Head of caudate nucleus (tissue), 42 donors: ENCODE measurements at regions of chr12 and their contacts with region 1.

Region 1: GRCh38 chr12:22544038-22544979 is at the start of gene C2CD5:
- DNase-seq: peak; percentile 92 to 99 (median 96)

Region 2: DNA sequence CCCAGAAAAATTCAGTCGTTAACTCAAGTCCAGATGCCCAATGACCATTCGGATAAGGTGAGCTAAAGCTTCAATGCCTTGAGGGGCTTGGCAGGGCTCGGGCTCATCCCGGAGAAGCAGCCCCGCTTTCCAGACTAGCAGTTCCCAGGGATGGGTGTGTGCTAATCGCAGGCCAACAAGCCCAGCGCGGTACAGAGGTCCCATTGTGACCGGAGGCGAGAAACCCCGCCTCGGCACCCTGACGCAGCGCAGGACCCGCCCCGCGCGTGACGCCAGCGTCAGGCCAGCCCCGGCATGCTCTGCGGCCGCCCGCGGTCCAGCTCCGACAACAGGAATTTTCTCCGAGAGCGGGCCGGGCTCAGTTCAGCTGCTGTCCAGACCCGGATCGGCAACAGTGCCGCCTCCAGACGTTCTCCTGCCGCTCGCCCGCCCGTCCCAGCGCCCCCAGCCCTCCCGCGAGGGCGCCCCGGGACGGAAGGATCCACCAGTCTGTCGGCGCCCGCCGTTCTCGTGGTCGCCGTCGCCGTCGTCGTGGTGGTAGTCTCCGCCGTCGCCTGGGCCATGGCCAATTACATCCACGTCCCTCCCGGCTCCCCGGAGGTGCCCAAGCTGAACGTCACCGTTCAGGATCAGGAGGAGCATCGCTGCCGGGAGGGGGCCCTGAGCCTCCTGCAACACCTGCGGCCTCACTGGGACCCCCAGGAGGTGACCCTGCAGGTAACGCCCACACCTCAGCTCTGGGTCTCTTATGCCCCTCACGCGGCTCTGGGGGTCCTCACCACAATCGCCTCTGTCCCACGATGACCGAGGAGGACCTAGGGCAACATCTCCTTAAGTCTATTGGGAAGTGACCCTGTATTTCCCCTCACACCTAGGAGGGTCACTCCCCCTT is 80.8 kb after region 1 on chr12 and contains the start of gene ETNK1:
- intact Hi-C with region 1: loop called (anchors 2 kb)
- DNase-seq: peak; percentile 92 to 99 (median 97)

Region 3: DNA sequence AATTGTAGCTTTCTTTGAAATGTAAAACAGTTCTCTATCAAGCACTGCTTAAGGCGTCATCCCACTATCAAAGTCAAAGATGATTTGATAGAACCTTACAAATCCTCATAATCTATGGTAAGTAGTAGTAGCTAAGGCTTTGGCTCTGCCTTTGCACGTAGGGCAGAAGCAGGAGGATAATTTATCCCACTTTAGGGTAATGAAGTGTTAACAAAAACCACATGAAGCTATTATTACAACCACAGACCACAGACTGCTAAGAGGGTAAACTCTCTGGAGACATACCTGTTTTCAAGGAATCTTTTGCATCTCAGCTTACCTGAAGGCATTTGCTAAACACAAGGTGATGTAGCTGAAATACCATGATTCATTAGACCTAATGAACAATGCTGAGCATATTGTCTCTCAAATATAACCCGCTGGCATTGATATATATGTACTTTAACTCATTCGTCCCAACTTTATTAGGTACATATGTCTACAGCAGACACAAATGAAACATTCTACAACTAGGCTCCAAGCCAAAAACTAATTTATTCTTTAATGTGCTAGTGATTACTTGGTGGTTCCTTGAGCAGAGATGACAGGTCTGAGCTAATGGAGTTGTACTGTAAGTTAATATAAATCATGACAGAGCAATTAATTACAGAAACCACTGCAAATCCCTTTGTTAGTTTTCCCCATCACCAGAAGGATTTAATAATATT is 449.5 kb after region 1 on chr12:
- intact Hi-C with region 1: no loop called
- DNase-seq: no peak